Activated B cell treated with CpG ODN at 0.5 μM for 24 hours (primary cell): ENCODE measurements at regions of chr10 and their contacts with region 1.

Region 1: GRCh38 chr10:27241652-27242472 is 1.3 kb upstream of the ACBD5 start:
- DNase-seq: peak; percentile 87
- ATAC-seq: peak; percentile 67
- H3K4me3 Mint-ChIP-seq: peak overlapping the region; percentile 98
- H3K27ac Mint-ChIP-seq: peak overlapping the region; percentile 99
- H3K4me1 Mint-ChIP-seq: peaks cover 45% of the 10 kb centered on the region
- H3K27me3 Mint-ChIP-seq: no peaks in the 10 kb centered on the region
- CTCF ChIP-seq: no peak

Region 2: DNA sequence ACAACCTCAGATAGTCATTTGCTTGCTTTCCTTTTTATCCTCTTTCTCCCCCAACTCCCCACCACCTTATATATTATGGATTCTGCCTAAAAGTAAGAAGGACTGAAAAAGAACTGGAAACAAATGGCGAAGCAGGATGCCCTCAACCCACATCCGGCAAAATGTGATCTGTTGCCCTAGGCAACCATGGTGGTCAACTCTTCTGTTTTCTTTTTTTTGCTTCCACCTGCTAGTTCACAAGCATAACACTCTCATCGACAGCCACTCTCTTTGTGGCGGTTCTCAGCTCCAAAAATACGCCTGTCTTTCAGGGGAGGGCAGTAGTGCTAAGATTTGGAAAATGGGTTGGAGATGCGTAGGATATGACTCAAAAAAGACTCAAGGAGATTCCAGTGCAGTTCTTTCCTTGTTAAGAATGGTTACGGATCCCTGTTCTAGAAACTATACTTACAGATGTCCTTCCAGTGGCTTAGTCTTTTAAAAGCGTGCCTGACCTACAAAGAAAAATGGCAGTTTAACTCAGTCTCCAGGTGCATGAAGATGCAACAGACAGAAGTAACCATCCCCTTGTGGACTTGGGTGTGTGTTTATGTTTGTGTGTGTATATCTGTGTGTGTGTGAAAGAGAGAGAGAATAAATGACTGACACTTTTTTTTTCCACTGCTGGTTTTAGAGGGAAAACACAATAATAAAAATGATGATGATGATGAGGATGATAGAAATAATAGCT is 793.0 kb before region 1 on chr10:
- CTCF ChIA-PET with region 1: no interaction called
- POLR2A ChIA-PET with region 1: no interaction called
- intact Hi-C with region 1: loop called (anchors 5 kb)
- DNase-seq: peak; percentile 43
- ATAC-seq: peak; percentile 66
- H3K4me3 Mint-ChIP-seq: peak overlapping the region; percentile 75
- H3K27ac Mint-ChIP-seq: peak overlapping the region; percentile 97
- H3K4me1 Mint-ChIP-seq: peaks cover 92% of the 10 kb centered on the region
- H3K27me3 Mint-ChIP-seq: no peaks in the 10 kb centered on the region
- CTCF ChIP-seq: no peak

Region 3: DNA sequence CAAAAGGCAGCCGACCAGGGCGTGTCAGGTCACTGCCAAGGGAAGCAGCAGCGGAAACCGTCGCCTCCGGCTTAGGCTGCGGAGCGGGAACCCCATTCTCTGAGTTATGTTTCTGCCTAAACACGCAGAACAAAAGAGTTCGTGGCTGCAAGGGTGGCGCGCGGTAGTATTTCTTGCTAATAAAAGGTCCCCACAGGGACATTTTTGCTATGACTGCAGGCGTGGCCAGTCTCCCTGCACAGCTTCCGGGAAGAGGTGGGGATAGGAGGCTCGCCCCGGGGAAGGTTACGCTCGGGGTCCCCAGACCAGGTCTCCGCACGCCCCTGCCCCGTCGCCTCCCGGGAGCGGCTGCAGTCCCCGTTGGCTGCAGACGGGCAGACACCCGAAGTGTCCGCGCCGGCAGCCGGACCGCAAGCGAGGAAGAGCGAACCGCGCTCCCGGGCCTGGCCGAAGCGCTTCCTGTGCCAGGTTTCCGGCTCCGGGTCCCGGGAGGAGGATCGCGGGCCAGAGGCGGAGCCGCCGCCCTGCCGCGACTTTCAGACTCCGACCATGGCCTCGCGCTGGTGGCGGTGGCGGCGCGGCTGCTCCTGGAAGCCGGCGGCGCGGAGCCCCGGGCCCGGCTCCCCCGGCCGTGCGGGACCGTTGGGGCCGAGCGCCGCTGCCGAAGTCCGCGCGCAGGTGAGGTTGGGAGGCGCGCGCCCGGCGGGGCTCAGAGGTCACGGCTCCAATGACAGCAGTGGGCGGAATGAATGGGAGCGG is 544.5 kb before region 1 on chr10 and contains the start of gene PDSS1:
- CTCF ChIA-PET with region 1: no interaction called
- POLR2A ChIA-PET with region 1: no interaction called
- intact Hi-C with region 1: loop called (anchors 5 kb)
- DNase-seq: peak; percentile 65
- ATAC-seq: peak; percentile 87
- H3K4me3 Mint-ChIP-seq: peak within 1 kb of the TSS; percentile 93
- H3K27ac Mint-ChIP-seq: peak within 1 kb of the TSS; percentile 84
- H3K4me1 Mint-ChIP-seq: peaks cover 27% of the 10 kb centered on the region
- H3K27me3 Mint-ChIP-seq: no peaks in the 10 kb centered on the region
- CTCF ChIP-seq: no peak
- total RNA-seq, gene PDSS1: 8.7 and 9.0 TPM in 2 replicates

Region 4: DNA sequence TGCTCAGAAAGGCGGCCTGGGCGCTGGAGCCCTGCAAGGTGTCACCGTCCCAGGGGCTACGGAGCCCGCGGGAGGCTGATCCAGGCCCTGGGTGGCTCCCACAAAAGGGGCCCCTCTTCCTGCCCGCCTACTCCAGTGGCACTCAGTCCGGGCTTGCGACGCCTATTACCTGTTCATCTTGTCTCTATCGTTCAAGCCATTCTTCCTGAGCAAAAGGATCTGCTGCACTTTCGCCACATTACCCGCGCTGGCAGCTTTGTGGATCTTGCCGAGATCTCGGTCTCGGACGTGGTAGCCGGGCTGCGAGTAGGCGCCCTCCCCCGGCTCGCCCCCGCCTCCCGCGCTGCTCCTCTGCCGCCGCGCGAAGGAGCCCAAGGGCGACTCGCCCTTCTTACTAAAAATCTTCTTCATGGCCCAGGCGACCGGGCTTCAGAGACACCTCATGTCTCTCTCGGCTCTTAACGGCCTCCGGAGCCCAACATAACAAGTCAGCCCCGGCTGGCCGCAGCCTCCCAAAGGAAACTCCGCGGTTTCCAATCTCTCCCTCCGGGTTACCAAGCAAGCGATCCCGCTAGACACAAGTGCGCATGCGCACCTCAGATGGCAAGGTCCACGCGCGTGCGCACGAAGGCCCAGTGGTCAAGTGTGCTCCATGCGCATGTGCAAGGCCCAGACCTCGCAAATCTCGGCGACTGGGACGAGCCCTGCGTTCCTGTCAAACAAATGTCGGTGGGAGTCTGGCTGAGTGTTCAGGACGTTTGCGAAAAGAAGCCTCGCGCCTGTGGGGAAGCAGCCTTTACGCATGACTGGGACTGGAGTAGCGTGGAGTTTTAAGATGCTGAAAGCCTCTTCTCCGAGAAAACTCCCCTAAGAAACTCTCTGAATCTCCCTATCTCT is 141.7 kb before region 1 on chr10 and contains the start of gene ANKRD26:
- CTCF ChIA-PET with region 1: no interaction called
- POLR2A ChIA-PET with region 1: no interaction called
- intact Hi-C with region 1: loop called (anchors 1 kb)
- DNase-seq: peak; percentile 92
- ATAC-seq: peak; percentile 93
- H3K4me3 Mint-ChIP-seq: peak within 1 kb of the TSS; percentile 94
- H3K27ac Mint-ChIP-seq: peak within 1 kb of the TSS; percentile 96
- H3K4me1 Mint-ChIP-seq: peaks cover 18% of the 10 kb centered on the region
- H3K27me3 Mint-ChIP-seq: no peaks in the 10 kb centered on the region
- CTCF ChIP-seq: no peak
- total RNA-seq, gene ANKRD26: 6.0 and 7.7 TPM in 2 replicates

Region 5: DNA sequence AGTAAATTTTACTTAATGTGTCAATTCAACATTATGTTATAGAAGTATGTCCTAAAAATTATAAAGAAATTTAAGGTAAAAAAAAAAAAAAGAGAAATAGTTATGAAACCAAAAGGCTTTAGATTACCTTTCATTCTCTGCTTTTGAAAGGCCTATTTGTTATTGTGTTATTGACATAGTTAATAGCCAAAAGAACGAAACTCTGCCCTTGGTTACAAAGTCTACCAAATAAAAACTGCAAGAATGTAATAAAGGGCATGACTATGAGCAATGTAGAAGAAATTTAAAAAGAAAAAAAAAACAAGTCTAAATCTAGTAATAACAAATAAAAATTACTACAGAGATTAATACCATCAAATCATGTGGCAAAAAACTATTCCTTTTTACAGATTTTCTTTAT is 11.8 kb before region 1 on chr10:
- CTCF ChIA-PET with region 1: interaction called, 3 read pairs
- POLR2A ChIA-PET with region 1: interaction called, 4 read pairs
- intact Hi-C with region 1: loop called (anchors 1 kb)
- DNase-seq: no peak
- ATAC-seq: no peak
- H3K4me3 Mint-ChIP-seq: no peak overlapping the region
- H3K27ac Mint-ChIP-seq: no peak overlapping the region
- H3K4me1 Mint-ChIP-seq: no peaks in the 10 kb centered on the region
- H3K27me3 Mint-ChIP-seq: no peaks in the 10 kb centered on the region
- CTCF ChIP-seq: no peak

Region 6: GRCh38 chr10:27360581-27361172 is 118.8 kb after region 1 on chr10:
- CTCF ChIA-PET with region 1: no interaction called
- POLR2A ChIA-PET with region 1: no interaction called
- intact Hi-C with region 1: loop called (anchors 5 kb)
- DNase-seq: peak; percentile 75
- ATAC-seq: peak; percentile 97
- H3K4me3 Mint-ChIP-seq: no peak overlapping the region
- H3K27ac Mint-ChIP-seq: no peak overlapping the region
- H3K4me1 Mint-ChIP-seq: peaks cover 8% of the 10 kb centered on the region
- H3K27me3 Mint-ChIP-seq: no peaks in the 10 kb centered on the region
- CTCF ChIP-seq: peak; percentile 99

Region 7: GRCh38 chr10:28334296-28334695 is 1092.4 kb after region 1 on chr10:
- CTCF ChIA-PET with region 1: no interaction called
- POLR2A ChIA-PET with region 1: interaction called, 4 read pairs
- intact Hi-C with region 1: loop called (anchors 1 kb)
- DNase-seq: no peak
- ATAC-seq: peak; percentile 56
- H3K4me3 Mint-ChIP-seq: peak overlapping the region; percentile 79
- H3K27ac Mint-ChIP-seq: peak overlapping the region; percentile 97
- H3K4me1 Mint-ChIP-seq: peaks cover 46% of the 10 kb centered on the region
- H3K27me3 Mint-ChIP-seq: no peaks in the 10 kb centered on the region
- CTCF ChIP-seq: no peak